ENCODE measurements at regions of chr7 and their contacts with region 1.

Region 1: DNA sequence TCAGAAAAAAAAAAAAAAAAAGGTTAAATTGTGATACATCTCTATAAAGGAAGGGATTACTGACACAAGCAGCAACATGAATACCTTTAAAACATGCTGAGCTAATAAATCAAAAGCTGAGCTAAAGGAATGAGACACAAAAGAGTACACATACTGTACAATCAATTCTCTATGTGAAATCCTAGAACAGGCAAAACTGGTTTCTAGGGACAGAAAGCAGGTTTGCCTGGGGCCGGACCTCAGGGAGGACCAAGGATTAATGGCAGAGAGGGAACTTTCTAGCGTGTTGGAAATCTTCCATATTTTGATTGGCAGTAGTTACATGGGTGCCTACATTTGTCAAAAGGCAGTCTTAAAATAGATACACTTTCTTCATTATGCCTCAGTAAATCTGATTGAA is 52.5 kb downstream of the KLRG2 start:
- DNase-seq: no peak
- H3K4me3 ChIP-seq: no peak overlapping the region
- H3K27ac ChIP-seq: no peak overlapping the region
- H3K4me1 ChIP-seq: peaks cover 0 to 5% (median 1%) of the 10 kb centered on the region in 4 experiments
- H3K27me3 ChIP-seq: no peaks in the 10 kb centered on the region

Region 2: GRCh38 chr7:139416405-139416804 is 14.6 kb before region 1 on chr7:
- CTCF ChIA-PET with region 1: interaction called, 28 read pairs
- POLR2A ChIA-PET with region 1: interaction called, 5 read pairs
- DNase-seq: no peak
- H3K4me3 ChIP-seq: no peak overlapping the region
- H3K27ac ChIP-seq: no peak overlapping the region
- H3K4me1 ChIP-seq: no peaks in the 10 kb centered on the region
- H3K27me3 ChIP-seq: no peaks in the 10 kb centered on the region

Region 3: DNA sequence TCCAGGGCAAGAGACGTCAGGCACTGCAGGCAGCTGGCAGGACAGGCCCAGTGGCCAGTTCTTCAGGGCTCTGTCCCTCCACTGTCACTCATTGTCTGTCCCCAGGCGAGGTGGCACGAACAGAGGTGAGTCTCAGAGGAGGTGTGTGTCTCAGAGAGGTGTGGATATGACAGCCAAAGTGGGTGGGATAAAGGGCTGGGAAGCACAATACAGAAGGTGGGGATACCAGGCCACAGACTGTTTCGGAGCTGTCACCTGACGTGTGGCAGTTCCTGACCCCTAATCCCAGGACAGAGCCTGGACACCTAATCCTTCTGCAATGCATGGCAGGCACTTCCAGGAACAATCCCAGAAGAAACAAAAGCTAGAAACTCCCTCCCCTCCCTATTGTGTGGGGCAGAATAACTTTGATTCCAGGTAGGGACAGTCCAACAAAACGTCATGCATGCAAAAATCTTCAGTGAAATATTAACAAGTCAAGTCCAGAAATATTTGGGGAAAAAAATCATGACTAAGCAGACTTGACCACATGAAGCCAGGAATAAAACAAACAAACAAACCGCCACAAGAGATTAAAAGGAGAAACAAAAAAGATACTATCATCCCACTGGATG is 40.8 kb after region 1 on chr7:
- CTCF ChIA-PET with region 1: interaction called, 11 read pairs
- POLR2A ChIA-PET with region 1: no interaction called
- DNase-seq: no peak
- H3K4me3 ChIP-seq: no peak overlapping the region
- H3K27ac ChIP-seq: no peak overlapping the region
- H3K4me1 ChIP-seq: no peaks in the 10 kb centered on the region
- H3K27me3 ChIP-seq: no peaks in the 10 kb centered on the region